ENCODE measurements at regions of chr17 and their contacts with region 1.

Region 1: DNA sequence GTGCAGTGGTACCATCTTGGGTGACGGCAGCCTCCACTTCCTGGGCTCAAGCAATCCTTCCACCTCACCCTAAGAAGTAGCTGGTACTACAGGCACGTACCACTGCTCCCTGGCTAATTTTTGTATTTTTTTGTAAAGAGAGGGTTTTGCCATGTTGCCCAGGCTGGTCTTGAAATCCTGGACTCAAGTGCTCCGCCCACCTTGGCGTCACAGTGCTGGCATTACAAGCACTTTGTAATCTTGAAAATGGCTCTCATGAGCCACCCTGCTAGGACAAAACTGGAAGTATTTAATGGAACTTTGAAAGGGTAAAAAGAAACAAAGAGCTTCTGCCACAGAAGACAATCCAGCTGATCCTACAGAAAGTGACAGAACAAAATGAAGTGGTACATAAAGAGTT is 9.2 kb downstream of the SUMO2 start:
- DNase-seq: no peak
- ATAC-seq: no peak
- H3K4me3 Mint-ChIP-seq: no peak overlapping the region
- H3K27ac Mint-ChIP-seq: peak overlapping the region; percentile 28
- H3K4me1 Mint-ChIP-seq: peaks cover 21% of the 10 kb centered on the region
- H3K27me3 Mint-ChIP-seq: no peaks in the 10 kb centered on the region

Region 2: GRCh38 chr17:75098801-75099448 is 74.6 kb before region 1 on chr17:
- CTCF ChIA-PET with region 1: no interaction called
- POLR2A ChIA-PET with region 1: no interaction called
- DNase-seq: no peak
- ATAC-seq: no peak
- H3K4me3 Mint-ChIP-seq: no peak overlapping the region
- H3K27ac Mint-ChIP-seq: peak overlapping the region; percentile 50
- H3K4me1 Mint-ChIP-seq: no peaks in the 10 kb centered on the region
- H3K27me3 Mint-ChIP-seq: no peaks in the 10 kb centered on the region

Region 3: GRCh38 chr17:75191584-75191983 is 18.1 kb after region 1 on chr17:
- CTCF ChIA-PET with region 1: interaction called, 13 read pairs
- POLR2A ChIA-PET with region 1: interaction called, 4 read pairs
- DNase-seq: no peak
- ATAC-seq: no peak
- H3K4me3 Mint-ChIP-seq: no peak overlapping the region
- H3K27ac Mint-ChIP-seq: no peak overlapping the region
- H3K4me1 Mint-ChIP-seq: peaks cover 17% of the 10 kb centered on the region
- H3K27me3 Mint-ChIP-seq: no peaks in the 10 kb centered on the region

Measured in activated CD8-positive, alpha-beta T cell treated with anti-CD3 and anti-CD28 coated beads, Interleukin-2, amount 10 ng/mL, durations not matched to agents 7 days and 5 days (primary cell).